PC-9 (cell line): ENCODE measurements at regions of chr3 and their contacts with region 1.

Region 1: GRCh38 chr3:168362661-168363229 is 267.0 kb upstream of the GOLIM4 start:
- DNase-seq: no peak
- H3K4me3 ChIP-seq: no peak overlapping the region
- H3K27ac ChIP-seq: no peak overlapping the region
- H3K4me1 ChIP-seq: no peaks in the 10 kb centered on the region
- H3K27me3 ChIP-seq: no peaks in the 10 kb centered on the region
- CTCF ChIP-seq: no peak

Region 2: DNA sequence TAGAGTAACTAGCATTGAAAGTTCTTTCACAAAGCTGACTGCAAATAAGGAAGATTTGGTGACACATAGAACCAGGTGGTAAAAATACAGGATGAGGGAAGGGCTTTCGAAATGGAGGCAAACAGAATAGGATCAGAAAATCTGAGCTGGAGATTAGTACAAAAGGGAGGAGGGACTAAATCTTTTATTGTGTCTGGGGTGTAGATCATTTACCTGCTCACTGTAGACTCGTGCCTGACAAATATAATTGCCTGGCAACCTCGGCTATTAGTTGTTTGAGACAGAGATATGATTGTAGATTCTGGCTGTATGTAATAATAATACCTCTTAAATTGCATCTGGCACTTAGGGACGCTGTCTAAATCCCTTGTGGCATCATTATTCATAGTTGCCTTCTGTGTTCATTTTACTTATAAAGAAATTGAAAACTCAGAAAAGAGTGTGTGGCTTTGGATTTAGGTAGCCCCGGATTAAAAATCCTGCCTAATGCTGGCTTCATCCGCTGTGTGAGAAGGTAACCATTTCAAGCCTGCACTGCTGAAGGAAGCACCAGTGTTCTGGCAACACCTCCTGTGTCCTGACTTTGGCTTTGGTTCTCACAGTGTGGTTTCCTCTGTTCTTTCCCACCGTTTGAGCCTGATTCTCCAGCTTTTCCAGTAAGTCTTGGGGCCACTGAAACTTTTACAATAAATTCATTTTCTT is 1650.1 kb after region 1 on chr3:
- CTCF ChIA-PET with region 1: no interaction called
- POLR2A ChIA-PET with region 1: interaction called, 14 read pairs
- intact Hi-C with region 1: no loop called
- DNase-seq: no peak
- H3K4me3 ChIP-seq: no peak overlapping the region
- H3K27ac ChIP-seq: no peak overlapping the region
- H3K4me1 ChIP-seq: no peaks in the 10 kb centered on the region
- H3K27me3 ChIP-seq: no peaks in the 10 kb centered on the region
- CTCF ChIP-seq: no peak